ENCODE measurements at regions of chr12 and their contacts with region 1.

Region 1: GRCh38 chr12:8544295-8544694 is 3.6 kb upstream of the CLEC4E start:
- H3K4me3 Mint-ChIP-seq: no peak overlapping the region
- H3K27ac Mint-ChIP-seq: no peak overlapping the region
- H3K4me1 Mint-ChIP-seq: peaks cover 31% of the 10 kb centered on the region
- H3K27me3 Mint-ChIP-seq: peaks cover 2% of the 10 kb centered on the region

Region 2: DNA sequence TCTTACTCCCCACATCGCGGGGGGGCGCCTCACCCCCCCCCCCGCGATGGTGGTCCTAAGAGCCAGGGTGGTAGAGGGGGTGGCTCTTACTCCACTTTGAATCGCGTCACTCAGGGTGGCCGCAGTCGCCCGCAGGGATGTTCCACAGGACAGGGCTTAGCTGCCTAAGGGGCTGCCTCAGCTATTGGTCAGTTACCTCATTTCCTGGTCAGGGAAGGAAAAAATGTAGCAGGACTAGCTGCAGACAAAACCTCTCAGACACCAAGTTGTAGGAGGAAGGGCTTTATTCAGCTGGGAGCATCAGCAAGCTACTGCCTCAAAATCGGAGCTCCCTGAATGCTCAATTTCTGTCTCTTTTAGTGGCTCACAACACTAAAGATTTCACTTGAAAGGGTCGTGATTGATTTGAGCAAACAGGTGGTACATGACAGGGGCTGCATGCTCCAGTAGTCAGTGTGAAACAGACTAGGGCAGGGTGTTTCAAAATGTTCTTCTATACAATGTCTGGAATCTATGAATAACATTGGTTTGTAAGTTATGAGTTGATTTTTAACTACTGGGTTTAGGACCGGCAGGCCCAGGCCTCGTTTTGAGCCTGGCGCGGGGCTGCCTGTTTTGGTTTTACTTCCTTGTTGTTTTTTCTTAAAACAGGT is 94.9 kb before region 1 on chr12:
- intact Hi-C with region 1: no loop called
- H3K4me3 Mint-ChIP-seq: no peak overlapping the region
- H3K27ac Mint-ChIP-seq: no peak overlapping the region
- H3K4me1 Mint-ChIP-seq: peaks cover 23% of the 10 kb centered on the region
- H3K27me3 Mint-ChIP-seq: no peaks in the 10 kb centered on the region

Region 3: DNA sequence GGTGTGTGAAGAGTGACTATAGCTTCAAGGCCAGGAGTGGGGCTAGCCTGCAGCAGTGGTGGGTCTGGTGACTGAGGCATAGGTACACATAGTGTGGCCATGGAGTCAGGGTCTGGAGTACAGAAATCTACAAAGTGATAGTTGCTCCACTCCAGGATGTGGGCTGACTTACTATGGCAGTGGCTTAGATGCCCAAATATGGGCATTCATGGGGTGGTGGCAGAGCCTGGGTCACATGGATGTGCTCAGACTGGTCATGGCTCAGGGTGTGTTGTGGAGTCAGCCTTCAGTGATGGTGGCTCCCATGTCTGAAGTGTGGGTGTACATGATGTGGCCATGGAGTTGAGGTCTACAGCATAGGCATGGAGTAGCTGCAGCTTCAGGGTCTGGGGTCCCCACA is 61.2 kb before region 1 on chr12:
- intact Hi-C with region 1: no loop called
- H3K4me3 Mint-ChIP-seq: no peak overlapping the region
- H3K27ac Mint-ChIP-seq: no peak overlapping the region
- H3K4me1 Mint-ChIP-seq: peaks cover 34% of the 10 kb centered on the region
- H3K27me3 Mint-ChIP-seq: peaks cover 9% of the 10 kb centered on the region

Region 4: GRCh38 chr12:8527250-8528130 is 16.8 kb before region 1 on chr12:
- intact Hi-C with region 1: no loop called
- H3K4me3 Mint-ChIP-seq: no peak overlapping the region
- H3K27ac Mint-ChIP-seq: no peak overlapping the region
- H3K4me1 Mint-ChIP-seq: no peaks in the 10 kb centered on the region
- H3K27me3 Mint-ChIP-seq: no peaks in the 10 kb centered on the region

Region 5: GRCh38 chr12:8562310-8562709 is 18.0 kb after region 1 on chr12:
- intact Hi-C with region 1: no loop called
- H3K4me3 Mint-ChIP-seq: no peak overlapping the region
- H3K27ac Mint-ChIP-seq: no peak overlapping the region
- H3K4me1 Mint-ChIP-seq: peaks cover 10% of the 10 kb centered on the region
- H3K27me3 Mint-ChIP-seq: no peaks in the 10 kb centered on the region

Region 6: GRCh38 chr12:8609061-8609570 is 64.8 kb after region 1 on chr12:
- intact Hi-C with region 1: loop called (anchors 2 kb)
- H3K4me3 Mint-ChIP-seq: peak overlapping the region; percentile 58
- H3K27ac Mint-ChIP-seq: peak overlapping the region; percentile 65
- H3K4me1 Mint-ChIP-seq: peaks cover 44% of the 10 kb centered on the region
- H3K27me3 Mint-ChIP-seq: peaks cover 3% of the 10 kb centered on the region

Measured in dendritic cell treated with granulocyte-macrophage colony-stimulating factor and Interleukin-4, amounts not matched to agents 40 ng/mL and 50 ng/mL, for 4 days (primary cell).